ENCODE measurements at regions of chr3 and their contacts with region 1.

Region 1: DNA sequence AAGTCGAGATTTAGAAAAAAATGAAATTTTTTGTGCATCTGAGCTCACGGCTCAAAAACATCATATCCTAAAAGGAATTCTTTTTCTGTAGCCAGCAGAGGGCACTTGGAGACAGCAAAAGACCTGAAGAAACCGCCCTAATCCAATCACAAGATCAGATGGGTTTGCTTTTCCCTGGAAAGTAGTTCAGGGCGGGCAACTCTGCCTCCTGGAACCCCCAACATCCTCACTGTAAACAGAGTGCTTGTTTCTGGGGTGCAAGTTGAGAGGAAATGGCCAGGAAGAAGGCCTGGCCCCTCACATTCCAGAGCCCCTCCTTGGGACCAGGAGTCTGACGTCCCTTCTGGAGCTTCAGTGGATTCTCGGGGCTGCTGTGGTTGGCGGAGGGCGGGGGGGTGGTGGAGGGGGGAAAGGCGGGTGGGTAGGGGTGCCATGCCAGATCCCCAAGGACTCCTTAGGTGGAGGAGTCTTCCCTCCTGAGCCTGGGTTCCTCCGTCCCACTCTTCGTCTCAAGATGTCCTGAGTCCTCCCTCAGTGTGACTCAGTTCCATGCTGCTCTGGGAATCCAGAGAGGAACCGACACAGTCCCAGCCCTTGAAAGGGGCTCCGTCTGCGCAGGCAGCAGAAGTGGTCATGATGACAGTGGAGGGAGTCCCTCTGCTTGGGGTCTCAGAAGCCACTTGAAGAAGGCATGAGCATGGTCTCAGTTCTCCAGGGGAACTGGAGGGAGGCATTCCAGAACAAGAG is 35.9 kb downstream of the CCK start:
- DNase-seq: no peak
- ATAC-seq: no peak
- H3K4me3 ChIP-seq: no peak overlapping the region
- H3K27ac ChIP-seq: no peak overlapping the region
- H3K4me1 ChIP-seq: peaks cover 18 to 20% of the 10 kb centered on the region in 2 donors
- H3K27me3 ChIP-seq: no peaks in the 10 kb centered on the region
- CTCF ChIP-seq: peak; percentile 38 to 61 (median 58)
- POLR2A ChIP-seq: no peak

Region 2: DNA sequence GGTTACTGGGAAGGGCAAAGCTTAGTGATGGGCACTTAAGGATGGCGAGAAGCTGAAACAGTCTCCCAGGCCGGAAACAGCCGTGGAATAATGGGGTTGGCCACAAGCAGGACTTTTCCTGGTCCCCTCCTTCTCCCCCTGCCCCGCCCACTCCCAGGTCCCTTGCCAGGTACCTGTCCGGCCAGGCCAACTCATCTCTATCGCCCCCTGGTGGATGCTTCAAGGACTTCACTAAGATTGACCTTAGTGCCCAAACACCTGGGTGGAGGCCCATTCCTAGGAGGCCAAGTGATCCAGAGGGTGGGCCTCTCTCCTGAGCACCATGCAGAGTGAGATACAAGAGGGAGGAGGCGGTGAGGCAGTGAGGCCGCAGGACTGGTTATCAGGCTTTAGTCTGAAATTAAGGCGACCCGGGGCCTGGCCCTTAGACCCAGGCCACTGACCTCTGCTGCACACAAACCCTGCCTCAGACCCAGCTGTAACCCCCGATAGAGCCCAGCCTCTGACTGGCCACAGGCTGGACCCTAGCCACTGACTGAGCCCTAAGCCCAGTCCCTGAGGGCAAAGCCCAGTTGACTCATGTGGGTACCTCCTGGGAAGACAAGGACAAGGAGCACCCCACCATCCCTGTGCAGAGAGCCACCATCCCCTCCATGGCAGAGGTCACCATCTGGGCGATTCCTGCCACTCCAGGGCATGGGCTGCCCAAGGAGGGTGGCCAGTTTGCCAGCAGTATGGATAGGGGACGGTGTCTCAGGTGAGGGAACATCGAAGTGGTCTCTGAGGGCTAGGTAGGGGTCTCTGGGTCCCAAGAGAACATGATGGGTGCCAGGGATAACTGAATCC is 310.0 kb after region 1 on chr3:
- in situ Hi-C with region 1: loop called in 3 of 4 experiments (anchors 5 to 25 kb)
- intact Hi-C with region 1: loop called (anchors 2 kb)
- DNase-seq: no peak
- ATAC-seq: peak; percentile 20 to 42
- H3K4me3 ChIP-seq: no peak overlapping the region
- H3K27ac ChIP-seq: peak overlapping the region in 2 of 4 donors; percentile 7 to 39
- H3K4me1 ChIP-seq: no peaks in the 10 kb centered on the region
- H3K27me3 ChIP-seq: no peaks in the 10 kb centered on the region
- CTCF ChIP-seq: peak; percentile 48 to 73 (median 56)
- POLR2A ChIP-seq: no peak

Region 3: GRCh38 chr3:43503067-43503728 is 1273.1 kb after region 1 on chr3:
- in situ Hi-C with region 1: no loop called
- intact Hi-C with region 1: no loop called
- DNase-seq: no peak
- ATAC-seq: peak in 1 of 2 donors; percentile 77
- H3K4me3 ChIP-seq: no peak overlapping the region
- H3K27ac ChIP-seq: no peak overlapping the region
- H3K4me1 ChIP-seq: no peaks in the 10 kb centered on the region
- H3K27me3 ChIP-seq: no peaks in the 10 kb centered on the region
- CTCF ChIP-seq: peak; percentile 26 to 71 (median 48)
- POLR2A ChIP-seq: no peak